Right ventricle myocardium inferior (tissue), 1 donor: ENCODE measurements at regions of chr22 and their contacts with region 1.

Region 1: DNA sequence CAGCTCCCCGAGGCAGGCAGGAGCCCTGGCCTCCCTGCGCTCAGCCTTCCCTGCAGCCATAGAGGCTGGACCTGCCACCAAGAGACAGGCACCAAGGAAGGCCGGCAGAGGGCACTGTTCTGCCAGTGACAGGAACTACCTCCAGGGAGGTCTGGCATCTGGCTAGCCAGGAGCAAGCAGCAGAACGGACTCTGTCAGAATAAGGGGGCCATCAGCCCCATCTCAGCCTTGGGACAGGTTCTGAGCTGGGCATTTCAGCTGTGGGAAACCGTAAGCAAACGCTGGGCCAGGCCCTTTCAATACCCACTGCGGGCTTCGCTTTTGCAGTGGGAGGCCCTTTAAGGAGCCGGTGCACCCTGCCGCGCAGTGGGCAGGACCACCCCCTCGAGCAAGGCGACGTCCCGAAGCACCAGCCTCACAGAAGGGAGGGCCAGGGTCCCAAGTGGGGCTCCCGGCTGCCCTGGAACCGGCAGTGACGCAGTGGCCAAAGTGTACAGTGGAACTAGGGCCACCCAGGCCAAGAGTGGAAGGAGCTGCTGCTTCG is 18.2 kb downstream of the IFT27 start:
- DNase-seq: peak; percentile 88
- ATAC-seq: peak; percentile 72

Region 2: DNA sequence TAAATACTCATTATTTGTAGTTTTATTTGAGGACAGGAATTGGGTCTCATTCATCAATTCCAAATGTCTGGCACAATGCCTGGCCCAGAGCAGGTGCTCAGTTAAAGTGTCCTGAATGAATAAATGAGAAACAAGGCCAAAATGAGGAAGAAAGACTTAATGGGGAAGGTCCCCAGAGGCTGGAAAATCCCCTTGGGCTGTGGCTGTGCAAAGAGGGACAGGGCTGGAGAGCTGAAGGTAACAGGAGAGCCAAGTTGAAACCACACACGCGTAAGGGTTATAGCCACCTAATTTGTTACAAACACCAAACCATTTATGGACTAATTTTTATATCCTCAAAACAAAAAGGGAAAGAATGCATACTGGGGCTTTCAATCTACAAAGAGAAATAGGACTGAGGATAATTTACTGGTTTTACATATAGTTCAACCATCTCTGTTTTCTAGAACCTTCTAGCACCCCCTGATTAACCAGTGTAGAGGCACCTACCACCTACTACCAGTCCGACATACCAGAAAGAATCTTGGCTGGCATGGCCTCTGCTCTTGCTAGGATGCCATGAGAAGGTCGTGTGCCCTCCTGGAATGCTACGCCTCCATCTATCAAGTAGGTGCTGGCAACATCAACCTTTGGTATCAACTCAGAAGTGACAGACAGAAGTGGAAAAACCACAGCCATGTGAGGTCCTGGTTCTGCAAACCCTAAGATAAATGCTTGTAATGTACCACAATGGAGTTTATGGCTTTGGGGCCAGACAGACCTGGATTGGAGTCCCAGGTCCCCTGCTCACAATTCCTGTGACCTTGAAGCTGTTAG is 398.4 kb before region 1 on chr22:
- intact Hi-C with region 1: no loop called
- DNase-seq: no peak
- ATAC-seq: peak; percentile 37

Region 3: DNA sequence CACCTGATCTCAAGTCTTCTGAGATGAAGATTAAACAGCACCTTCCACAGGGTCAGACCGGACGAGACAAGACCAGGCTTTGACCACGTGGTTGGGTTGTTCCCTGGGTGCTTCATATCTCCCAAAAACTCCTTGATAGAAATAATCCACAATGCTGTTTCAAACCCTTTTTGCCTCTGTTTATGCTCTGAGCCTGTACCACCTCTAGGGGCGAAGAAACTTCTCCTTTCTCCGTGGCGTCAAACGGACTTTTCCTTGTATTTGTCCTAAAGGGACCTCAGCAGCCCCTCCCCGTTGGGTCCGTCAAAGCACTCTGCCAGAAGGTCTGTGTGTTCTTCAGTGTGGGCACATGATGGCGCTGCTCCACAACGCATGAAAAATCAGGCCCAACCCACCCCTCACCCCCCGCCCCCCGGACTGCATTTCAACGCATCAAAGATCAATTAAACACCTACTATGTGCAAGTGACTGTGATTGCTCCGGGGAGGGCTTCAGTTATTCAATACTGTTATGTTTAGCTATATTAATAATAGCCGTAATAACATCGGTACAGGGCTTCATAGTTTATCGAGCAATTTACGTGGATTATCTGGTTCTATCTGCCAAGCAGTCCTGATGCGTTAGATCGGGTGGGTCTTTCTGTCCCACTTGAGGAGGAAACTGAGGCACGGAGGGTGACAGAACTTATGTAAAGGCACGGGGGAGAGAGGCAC is 211.5 kb before region 1 on chr22:
- intact Hi-C with region 1: loop called (anchors 5 kb)
- DNase-seq: no peak
- ATAC-seq: peak; percentile 56